ENCODE measurements at regions of chr5 and their contacts with region 1.

Region 1: DNA sequence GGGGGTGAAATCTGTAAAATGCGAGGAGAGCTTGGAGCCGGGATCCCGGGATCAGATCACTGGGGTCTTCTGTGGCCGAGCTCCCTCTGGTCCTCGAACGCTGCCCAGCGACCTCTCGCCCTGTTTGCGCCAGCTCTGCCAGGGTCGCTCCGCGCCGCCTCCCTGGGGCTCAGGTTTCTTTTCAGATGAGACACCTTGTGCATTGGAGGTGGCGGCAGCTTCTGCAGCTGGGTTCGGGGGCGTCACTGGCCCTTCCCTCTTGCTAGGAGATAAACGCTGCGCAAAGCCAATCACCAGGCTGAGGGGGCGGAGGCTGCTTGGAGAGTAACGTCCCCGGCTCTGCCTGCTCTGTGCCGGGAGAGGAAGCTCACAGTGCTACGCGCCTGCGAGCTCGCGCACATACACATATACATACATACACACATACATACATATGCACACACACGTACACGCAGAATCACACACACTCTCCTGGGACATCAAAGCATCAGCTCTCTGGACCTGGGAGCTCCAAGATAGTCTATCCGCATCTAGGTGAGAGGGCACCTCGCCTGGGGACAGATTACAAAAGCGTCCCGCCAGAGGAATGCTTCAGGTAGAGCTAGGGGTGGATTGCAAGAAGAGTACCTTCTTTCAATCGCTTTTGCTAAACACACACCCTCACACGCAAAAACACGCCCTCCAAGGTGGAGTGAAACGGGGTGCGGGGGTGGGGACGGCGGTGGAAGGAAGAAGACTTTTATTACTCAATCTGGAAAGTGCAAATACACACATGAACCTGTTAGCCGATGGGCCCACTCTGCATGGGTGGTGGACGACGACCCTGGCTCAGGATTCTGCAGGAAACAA is at the start of gene ST8SIA4:
- DNase-seq: peak; percentile 91
- H3K4me3 ChIP-seq: peak within 1 kb of the TSS; percentile 55 to 98 (median 97)
- H3K27ac ChIP-seq: peak within 1 kb of the TSS; percentile 80
- H3K4me1 ChIP-seq: peaks cover 19% of the 10 kb centered on the region
- H3K27me3 ChIP-seq: no peaks in the 10 kb centered on the region
- CTCF ChIP-seq: no peak
- POLR2A ChIP-seq: peak; percentile 57
- total RNA-seq, gene ST8SIA4: 25.0 and 28.3 TPM in 2 replicates

Region 2: GRCh38 chr5:100535060-100536005 is 367.9 kb before region 1 on chr5 and contains the start of gene FAM174A:
- CTCF ChIA-PET with region 1: no interaction called
- POLR2A ChIA-PET with region 1: no interaction called
- dilution Hi-C with region 1: no loop called
- intact Hi-C with region 1: loop called (anchors 1 kb)
- DNase-seq: peak; percentile 98
- H3K4me3 ChIP-seq: peak within 1 kb of the TSS; percentile 40 to 71 (median 61)
- H3K27ac ChIP-seq: peak within 1 kb of the TSS; percentile 53
- H3K4me1 ChIP-seq: peaks cover 7% of the 10 kb centered on the region
- H3K27me3 ChIP-seq: no peaks in the 10 kb centered on the region
- CTCF ChIP-seq: no peak
- POLR2A ChIP-seq: peak; percentile 95
- total RNA-seq, gene FAM174A: 11.8 and 14.7 TPM in 2 replicates

Region 3: DNA sequence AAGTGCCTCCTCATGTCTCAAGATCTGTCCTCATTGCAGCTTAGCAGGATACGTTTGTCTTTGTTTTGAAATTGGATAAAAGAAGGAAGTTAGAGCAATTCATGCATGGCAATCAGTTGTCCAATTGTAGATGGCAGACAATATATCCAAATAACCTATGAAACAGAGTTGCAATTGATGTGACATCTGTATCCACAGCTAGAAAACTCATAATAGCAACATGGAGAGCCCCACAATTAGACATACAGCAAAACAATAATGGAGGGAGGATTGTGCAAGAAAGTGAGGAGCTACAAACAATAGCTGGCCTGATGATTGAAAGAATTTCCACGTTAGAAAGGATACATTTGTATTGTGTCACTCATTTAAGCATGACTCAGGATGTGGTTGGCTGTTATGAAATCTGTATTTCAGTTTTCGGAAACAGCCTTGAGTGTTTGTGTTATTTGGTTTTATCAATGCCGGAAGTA is 236.1 kb before region 1 on chr5:
- CTCF ChIA-PET with region 1: interaction called, 7 read pairs
- POLR2A ChIA-PET with region 1: no interaction called
- dilution Hi-C with region 1: no loop called
- intact Hi-C with region 1: loop called (anchors 1 kb)
- DNase-seq: peak; percentile 54
- H3K4me3 ChIP-seq: no peak overlapping the region
- H3K27ac ChIP-seq: peak overlapping the region; percentile 66
- H3K4me1 ChIP-seq: peaks cover 20% of the 10 kb centered on the region
- H3K27me3 ChIP-seq: no peaks in the 10 kb centered on the region
- CTCF ChIP-seq: no peak
- POLR2A ChIP-seq: no peak

Region 4: GRCh38 chr5:100790170-100790665 is 113.0 kb before region 1 on chr5:
- CTCF ChIA-PET with region 1: interaction called, 12 read pairs
- POLR2A ChIA-PET with region 1: no interaction called
- dilution Hi-C with region 1: no loop called
- intact Hi-C with region 1: no loop called
- DNase-seq: peak; percentile 16
- H3K4me3 ChIP-seq: no peak overlapping the region
- H3K27ac ChIP-seq: no peak overlapping the region
- H3K4me1 ChIP-seq: no peaks in the 10 kb centered on the region
- H3K27me3 ChIP-seq: no peaks in the 10 kb centered on the region
- CTCF ChIP-seq: peak in 1 of 2 donors; percentile 8
- POLR2A ChIP-seq: no peak

Region 5: DNA sequence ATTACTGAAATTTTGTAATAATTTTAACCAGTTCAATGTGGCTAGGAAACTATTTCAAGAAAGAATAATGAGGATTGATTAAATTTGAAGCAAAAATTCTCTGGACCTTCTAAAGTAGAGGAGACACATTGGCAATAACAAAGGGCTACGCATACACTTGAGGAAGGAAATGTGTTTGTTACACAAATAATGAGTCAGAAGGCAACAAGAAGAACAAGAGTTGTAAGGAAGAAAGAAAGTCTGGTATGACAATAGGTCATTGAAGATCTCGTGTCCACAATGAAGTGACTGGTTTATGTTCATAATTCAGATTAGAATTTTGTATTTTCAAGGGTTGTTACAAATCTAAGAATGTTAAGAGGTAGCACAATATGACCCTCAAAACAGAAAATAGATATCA is 26.0 kb before region 1 on chr5:
- CTCF ChIA-PET with region 1: interaction called, 6 read pairs
- POLR2A ChIA-PET with region 1: no interaction called
- dilution Hi-C with region 1: no loop called
- intact Hi-C with region 1: loop called (anchors 1 kb)
- DNase-seq: peak; percentile 87
- H3K4me3 ChIP-seq: no peak overlapping the region
- H3K27ac ChIP-seq: peak overlapping the region; percentile 84
- H3K4me1 ChIP-seq: peaks cover 16% of the 10 kb centered on the region
- H3K27me3 ChIP-seq: no peaks in the 10 kb centered on the region
- CTCF ChIP-seq: no peak
- POLR2A ChIP-seq: no peak

Region 6: GRCh38 chr5:101153526-101153925 is 250.3 kb after region 1 on chr5:
- CTCF ChIA-PET with region 1: no interaction called
- POLR2A ChIA-PET with region 1: no interaction called
- dilution Hi-C with region 1: no loop called
- intact Hi-C with region 1: no loop called
- DNase-seq: no peak
- H3K4me3 ChIP-seq: no peak overlapping the region
- H3K27ac ChIP-seq: no peak overlapping the region
- H3K4me1 ChIP-seq: no peaks in the 10 kb centered on the region
- H3K27me3 ChIP-seq: no peaks in the 10 kb centered on the region
- CTCF ChIP-seq: no peak
- POLR2A ChIP-seq: no peak

Region 7: DNA sequence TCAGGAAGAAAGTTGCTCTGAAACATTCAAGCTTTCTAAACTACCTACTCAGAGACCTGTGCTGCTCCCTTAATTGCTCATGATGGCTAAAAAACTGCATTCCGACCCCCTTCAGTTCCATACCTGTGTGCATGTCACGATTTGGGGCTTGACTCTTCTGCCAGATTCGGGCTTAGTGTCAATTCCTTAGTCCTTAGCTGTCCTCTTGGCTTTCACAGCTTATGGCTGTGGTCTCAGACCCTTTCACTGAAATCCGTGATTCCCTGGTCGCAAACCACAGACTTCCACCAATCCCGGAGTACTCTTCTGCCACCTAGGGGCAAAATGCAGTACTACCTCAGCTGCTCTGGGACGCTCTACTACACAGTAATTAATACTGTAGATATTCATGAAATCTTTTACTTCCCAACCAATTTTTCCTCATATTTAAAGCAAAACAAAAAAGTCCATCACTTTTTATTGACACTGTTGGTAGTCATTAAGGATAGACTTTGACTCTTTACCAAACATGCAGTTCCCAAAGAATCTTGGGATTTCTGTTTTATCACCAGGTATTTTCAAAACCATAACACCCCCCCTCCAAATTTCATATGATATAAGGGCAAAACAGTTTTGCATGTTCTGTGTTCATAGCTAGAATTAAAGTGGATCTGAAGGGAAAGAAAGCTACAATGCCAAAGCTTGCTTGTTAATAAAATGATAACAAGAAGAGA is 775.4 kb after region 1 on chr5:
- CTCF ChIA-PET with region 1: interaction called, 5 read pairs
- POLR2A ChIA-PET with region 1: no interaction called
- dilution Hi-C with region 1: no loop called
- intact Hi-C with region 1: loop called (anchors 5 kb)
- DNase-seq: peak; percentile 71
- H3K4me3 ChIP-seq: no peak overlapping the region
- H3K27ac ChIP-seq: no peak overlapping the region
- H3K4me1 ChIP-seq: no peaks in the 10 kb centered on the region
- H3K27me3 ChIP-seq: no peaks in the 10 kb centered on the region
- CTCF ChIP-seq: peak; percentile 82 to 93
- POLR2A ChIP-seq: no peak

Measured in endothelial cell of umbilical vein (primary cell).